HCT116 (cell line): ENCODE measurements at regions of chr2 and their contacts with region 1.

Region 1: GRCh38 chr2:148737742-148738141 is 93.2 kb downstream of the EPC2 start:
- DNase-seq: no peak
- ATAC-seq: no peak
- H3K4me3 ChIP-seq: no peak overlapping the region
- H3K27ac ChIP-seq: no peak overlapping the region
- H3K4me1 ChIP-seq: no peaks in the 10 kb centered on the region
- H3K27me3 ChIP-seq: no peaks in the 10 kb centered on the region
- CTCF ChIP-seq: no peak
- POLR2A ChIP-seq: no peak
- RAD21 ChIP-seq: no peak

Region 2: GRCh38 chr2:148122788-148123187 is 615.0 kb before region 1 on chr2:
- CTCF ChIA-PET with region 1: no interaction called
- POLR2A ChIA-PET with region 1: no interaction called
- RAD21 ChIA-PET with region 1: no interaction called
- intact Hi-C with region 1: no loop called
- DNase-seq: no peak
- ATAC-seq: no peak
- H3K4me3 ChIP-seq: no peak overlapping the region
- H3K27ac ChIP-seq: no peak overlapping the region
- H3K4me1 ChIP-seq: no peaks in the 10 kb centered on the region
- H3K27me3 ChIP-seq: no peaks in the 10 kb centered on the region
- CTCF ChIP-seq: no peak
- POLR2A ChIP-seq: no peak
- RAD21 ChIP-seq: no peak

Region 3: GRCh38 chr2:148756396-148756931 is 18.7 kb after region 1 on chr2:
- CTCF ChIA-PET with region 1: no interaction called
- POLR2A ChIA-PET with region 1: interaction called, 3 read pairs
- RAD21 ChIA-PET with region 1: no interaction called
- intact Hi-C with region 1: loop called (anchors 1 kb)
- DNase-seq: no peak
- ATAC-seq: no peak
- H3K4me3 ChIP-seq: no peak overlapping the region
- H3K27ac ChIP-seq: no peak overlapping the region
- H3K4me1 ChIP-seq: no peaks in the 10 kb centered on the region
- H3K27me3 ChIP-seq: no peaks in the 10 kb centered on the region
- CTCF ChIP-seq: no peak
- POLR2A ChIP-seq: no peak
- RAD21 ChIP-seq: no peak